Body of pancreas (tissue), 4 donors: ENCODE measurements at regions of chr6 and their contacts with region 1.

Region 1: GRCh38 chr6:55239099-55239498 is 64.8 kb downstream of the HCRTR2 start:
- DNase-seq: peak; percentile 49 to 84 (median 64)
- ATAC-seq: peak; percentile 68
- H3K4me3 ChIP-seq: no peak overlapping the region
- H3K27ac ChIP-seq: no peak overlapping the region
- H3K4me1 ChIP-seq: peaks cover 9% of the 10 kb centered on the region
- H3K27me3 ChIP-seq: no peaks in the 10 kb centered on the region
- CTCF ChIP-seq: no peak
- POLR2A ChIP-seq: no peak

Region 2: GRCh38 chr6:53986165-53986720 is 1252.9 kb before region 1 on chr6:
- intact Hi-C with region 1: loop called (anchors 10 kb)
- DNase-seq: peak; percentile 27 to 50 (median 44)
- ATAC-seq: no peak
- H3K4me3 ChIP-seq: no peak overlapping the region
- H3K27ac ChIP-seq: no peak overlapping the region
- H3K4me1 ChIP-seq: no peaks in the 10 kb centered on the region
- H3K27me3 ChIP-seq: no peaks in the 10 kb centered on the region
- CTCF ChIP-seq: peak; percentile 17 to 70 (median 60)
- POLR2A ChIP-seq: no peak

Region 3: GRCh38 chr6:55167860-55168259 is 71.2 kb before region 1 on chr6:
- intact Hi-C with region 1: no loop called
- DNase-seq: no peak
- ATAC-seq: no peak
- H3K4me3 ChIP-seq: no peak overlapping the region
- H3K27ac ChIP-seq: no peak overlapping the region
- H3K4me1 ChIP-seq: no peaks in the 10 kb centered on the region
- H3K27me3 ChIP-seq: no peaks in the 10 kb centered on the region
- CTCF ChIP-seq: no peak
- POLR2A ChIP-seq: no peak

Region 4: DNA sequence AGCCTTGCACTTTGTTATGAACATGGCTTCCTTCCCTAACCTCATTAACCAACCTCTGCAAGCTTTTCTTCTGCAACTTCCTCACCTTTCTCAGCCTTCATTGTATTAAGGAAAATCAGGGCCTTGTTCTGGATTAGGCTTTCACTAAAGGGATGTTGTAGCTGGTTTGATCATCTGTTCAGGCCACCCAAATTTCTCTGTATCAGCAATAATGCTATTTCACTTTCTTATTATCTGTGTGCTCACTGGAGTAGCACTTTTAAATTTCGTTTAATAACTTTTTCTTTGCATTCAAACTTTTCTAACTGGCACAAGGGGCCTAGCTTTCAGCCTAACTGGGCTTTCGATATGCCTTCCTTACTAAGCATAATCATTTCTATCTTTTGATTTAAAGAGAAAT is 184.8 kb after region 1 on chr6:
- intact Hi-C with region 1: no loop called
- DNase-seq: no peak
- ATAC-seq: no peak
- H3K4me3 ChIP-seq: no peak overlapping the region
- H3K27ac ChIP-seq: no peak overlapping the region
- H3K4me1 ChIP-seq: peaks cover 7% of the 10 kb centered on the region
- H3K27me3 ChIP-seq: no peaks in the 10 kb centered on the region
- CTCF ChIP-seq: no peak
- POLR2A ChIP-seq: no peak